B cell (primary cell): ENCODE measurements at regions of chr6 and their contacts with region 1.

Region 1: GRCh38 chr6:87066449-87067333 is 28.2 kb downstream of the CGA start:
- DNase-seq: peak; percentile 67
- ATAC-seq: no peak
- H3K4me3 ChIP-seq: peak overlapping the region in 2 of 5 experiments; percentile 29 to 33
- H3K4me3 Mint-ChIP-seq: peak overlapping the region; percentile 44
- H3K27ac ChIP-seq: no peak overlapping the region
- H3K27ac Mint-ChIP-seq: no peak overlapping the region
- H3K4me1 ChIP-seq: no peaks in the 10 kb centered on the region
- H3K4me1 Mint-ChIP-seq: peaks cover 5% of the 10 kb centered on the region
- H3K27me3 ChIP-seq: no peaks in the 10 kb centered on the region
- H3K27me3 Mint-ChIP-seq: no peaks in the 10 kb centered on the region
- CTCF ChIP-seq: peak; percentile 78

Region 2: GRCh38 chr6:86969573-86969972 is 97.1 kb before region 1 on chr6:
- CTCF ChIA-PET with region 1: no interaction called
- POLR2A ChIA-PET with region 1: no interaction called
- intact Hi-C with region 1: no loop called
- DNase-seq: no peak
- ATAC-seq: no peak
- H3K4me3 ChIP-seq: no peak overlapping the region
- H3K4me3 Mint-ChIP-seq: no peak overlapping the region
- H3K27ac ChIP-seq: no peak overlapping the region
- H3K27ac Mint-ChIP-seq: no peak overlapping the region
- H3K4me1 ChIP-seq: no peaks in the 10 kb centered on the region
- H3K4me1 Mint-ChIP-seq: no peaks in the 10 kb centered on the region
- H3K27me3 ChIP-seq: peaks cover 0 to 3% (median 1%) of the 10 kb centered on the region in 4 experiments
- H3K27me3 Mint-ChIP-seq: peaks cover 13% of the 10 kb centered on the region
- CTCF ChIP-seq: no peak

Region 3: GRCh38 chr6:87078983-87079616 is 12.4 kb after region 1 on chr6:
- CTCF ChIA-PET with region 1: interaction called, 89 read pairs
- POLR2A ChIA-PET with region 1: no interaction called
- intact Hi-C with region 1: no loop called
- DNase-seq: peak; percentile 64
- ATAC-seq: peak; percentile 73
- H3K4me3 ChIP-seq: no peak overlapping the region
- H3K4me3 Mint-ChIP-seq: no peak overlapping the region
- H3K27ac ChIP-seq: no peak overlapping the region
- H3K27ac Mint-ChIP-seq: no peak overlapping the region
- H3K4me1 ChIP-seq: peaks cover 0 to 8% of the 10 kb centered on the region in 2 donors
- H3K4me1 Mint-ChIP-seq: peaks cover 21% of the 10 kb centered on the region
- H3K27me3 ChIP-seq: no peaks in the 10 kb centered on the region
- H3K27me3 Mint-ChIP-seq: no peaks in the 10 kb centered on the region
- CTCF ChIP-seq: peak; percentile 89

Region 4: DNA sequence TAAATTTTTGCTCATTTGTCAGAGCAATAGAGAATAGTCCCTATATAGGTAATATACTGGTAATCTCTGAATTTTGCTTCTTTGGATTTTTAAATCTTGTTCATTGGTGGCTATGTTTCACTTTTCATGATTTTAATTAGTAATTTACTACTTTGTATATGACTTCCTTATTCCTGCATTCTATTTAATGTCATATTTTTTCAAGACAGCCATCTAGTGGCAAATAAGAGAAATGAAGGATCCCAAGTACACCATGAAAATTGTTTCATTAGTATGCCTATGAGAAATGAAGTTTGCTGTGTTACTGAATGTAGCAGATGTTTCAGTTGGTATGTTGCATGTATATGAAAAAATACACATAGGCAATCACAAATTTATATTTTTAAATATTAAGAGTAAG is 171.1 kb after region 1 on chr6:
- CTCF ChIA-PET with region 1: interaction called, 5 read pairs
- POLR2A ChIA-PET with region 1: no interaction called
- intact Hi-C with region 1: loop called (anchors 5 kb)
- DNase-seq: peak; percentile 39
- ATAC-seq: peak; percentile 49
- H3K4me3 ChIP-seq: no peak overlapping the region
- H3K4me3 Mint-ChIP-seq: no peak overlapping the region
- H3K27ac ChIP-seq: no peak overlapping the region
- H3K27ac Mint-ChIP-seq: no peak overlapping the region
- H3K4me1 ChIP-seq: no peaks in the 10 kb centered on the region
- H3K4me1 Mint-ChIP-seq: peaks cover 3% of the 10 kb centered on the region
- H3K27me3 ChIP-seq: no peaks in the 10 kb centered on the region
- H3K27me3 Mint-ChIP-seq: no peaks in the 10 kb centered on the region
- CTCF ChIP-seq: peak; percentile 52